T-cell (primary cell): ENCODE measurements at regions of chr14 and their contacts with region 1.

Region 1: GRCh38 chr14:99199846-99200653 is 71.9 kb downstream of the BCL11B start:
- DNase-seq: no peak
- ATAC-seq: no peak
- H3K4me3 ChIP-seq: no peak overlapping the region
- H3K4me3 Mint-ChIP-seq: peak overlapping the region; percentile 35 to 89 (median 43)
- H3K27ac ChIP-seq: peak overlapping the region; percentile 73
- H3K27ac Mint-ChIP-seq: peak overlapping the region; percentile 97 to 99
- H3K4me1 ChIP-seq: peaks cover 81 to 99% of the 10 kb centered on the region in 2 experiments
- H3K4me1 Mint-ChIP-seq: peaks cover 99 to 100% (median 100%) of the 10 kb centered on the region in 3 donors
- H3K27me3 ChIP-seq: no peaks in the 10 kb centered on the region
- H3K27me3 Mint-ChIP-seq: no peaks in the 10 kb centered on the region

Region 2: GRCh38 chr14:99215277-99215676 is 15.2 kb after region 1 on chr14:
- CTCF ChIA-PET with region 1: interaction called in 1 of 2 experiments, 3 read pairs
- POLR2A ChIA-PET with region 1: interaction called, 4 to 11 read pairs
- DNase-seq: no peak
- ATAC-seq: no peak
- H3K4me3 ChIP-seq: peak overlapping the region in 1 of 2 donors; percentile 28
- H3K4me3 Mint-ChIP-seq: peak overlapping the region; percentile 66 to 89 (median 74)
- H3K27ac ChIP-seq: peak overlapping the region; percentile 27
- H3K27ac Mint-ChIP-seq: peak overlapping the region; percentile 87 to 97
- H3K4me1 ChIP-seq: peaks cover 70 to 99% of the 10 kb centered on the region in 2 experiments
- H3K4me1 Mint-ChIP-seq: peaks cover 94 to 100% (median 96%) of the 10 kb centered on the region in 3 donors
- H3K27me3 ChIP-seq: no peaks in the 10 kb centered on the region
- H3K27me3 Mint-ChIP-seq: no peaks in the 10 kb centered on the region

Region 3: GRCh38 chr14:99537399-99537798 is 337.3 kb after region 1 on chr14:
- CTCF ChIA-PET with region 1: no interaction called
- POLR2A ChIA-PET with region 1: no interaction called
- DNase-seq: no peak
- ATAC-seq: no peak
- H3K4me3 ChIP-seq: no peak overlapping the region
- H3K4me3 Mint-ChIP-seq: no peak overlapping the region
- H3K27ac ChIP-seq: no peak overlapping the region
- H3K27ac Mint-ChIP-seq: no peak overlapping the region
- H3K4me1 ChIP-seq: peaks cover 0 to 7% of the 10 kb centered on the region in 2 experiments
- H3K4me1 Mint-ChIP-seq: peaks cover 6 to 9% (median 7%) of the 10 kb centered on the region in 3 donors
- H3K27me3 ChIP-seq: peaks cover 0 to 5% of the 10 kb centered on the region in 2 experiments
- H3K27me3 Mint-ChIP-seq: no peaks in the 10 kb centered on the region